ENCODE measurements at regions of chr4 and their contacts with region 1.

Region 1: GRCh38 chr4:115945026-115945425 is 831.6 kb upstream of the NDST4 start:
- DNase-seq: no peak
- ATAC-seq: no peak
- H3K4me3 ChIP-seq: no peak overlapping the region
- H3K27ac ChIP-seq: no peak overlapping the region
- H3K4me1 ChIP-seq: no peaks in the 10 kb centered on the region
- H3K27me3 ChIP-seq: no peaks in the 10 kb centered on the region

Region 2: DNA sequence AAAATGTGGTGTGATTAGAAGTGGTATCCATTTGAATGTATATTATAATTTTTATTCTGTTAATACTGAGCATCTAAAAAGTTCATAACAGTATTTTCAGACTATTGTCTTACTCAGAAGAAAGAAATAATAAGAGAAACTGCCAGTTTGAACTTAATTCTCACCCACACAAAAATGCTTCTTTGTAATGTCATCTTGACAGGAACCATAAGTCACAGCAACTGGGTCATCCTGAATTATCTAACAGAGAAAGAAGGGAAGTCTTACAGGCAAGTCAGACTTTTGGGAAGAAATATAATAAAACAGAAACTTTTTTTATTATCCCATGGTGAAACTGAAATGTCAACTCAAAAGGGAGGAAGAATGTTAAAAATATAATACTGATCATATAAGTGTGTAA is 914.7 kb before region 1 on chr4:
- intact Hi-C with region 1: loop called in 1 of 2 experiments (anchors 5 kb)
- DNase-seq: no peak
- ATAC-seq: no peak
- H3K4me3 ChIP-seq: no peak overlapping the region
- H3K27ac ChIP-seq: no peak overlapping the region
- H3K4me1 ChIP-seq: no peaks in the 10 kb centered on the region
- H3K27me3 ChIP-seq: no peaks in the 10 kb centered on the region

Region 3: GRCh38 chr4:116150152-116150551 is 205.1 kb after region 1 on chr4:
- intact Hi-C with region 1: no loop called
- DNase-seq: no peak
- ATAC-seq: no peak
- H3K4me3 ChIP-seq: no peak overlapping the region
- H3K27ac ChIP-seq: no peak overlapping the region
- H3K4me1 ChIP-seq: no peaks in the 10 kb centered on the region
- H3K27me3 ChIP-seq: no peaks in the 10 kb centered on the region